Endothelial cell of umbilical vein (primary cell): ENCODE measurements at regions of chr11 and their contacts with region 1.

Region 1: GRCh38 chr11:23123753-23124152 is 263.5 kb upstream of the CCDC179 start:
- DNase-seq: peak; percentile 69
- H3K4me3 ChIP-seq: no peak overlapping the region
- H3K27ac ChIP-seq: peak overlapping the region; percentile 40
- H3K4me1 ChIP-seq: peaks cover 15% of the 10 kb centered on the region
- H3K27me3 ChIP-seq: no peaks in the 10 kb centered on the region
- CTCF ChIP-seq: no peak
- POLR2A ChIP-seq: no peak

Region 2: DNA sequence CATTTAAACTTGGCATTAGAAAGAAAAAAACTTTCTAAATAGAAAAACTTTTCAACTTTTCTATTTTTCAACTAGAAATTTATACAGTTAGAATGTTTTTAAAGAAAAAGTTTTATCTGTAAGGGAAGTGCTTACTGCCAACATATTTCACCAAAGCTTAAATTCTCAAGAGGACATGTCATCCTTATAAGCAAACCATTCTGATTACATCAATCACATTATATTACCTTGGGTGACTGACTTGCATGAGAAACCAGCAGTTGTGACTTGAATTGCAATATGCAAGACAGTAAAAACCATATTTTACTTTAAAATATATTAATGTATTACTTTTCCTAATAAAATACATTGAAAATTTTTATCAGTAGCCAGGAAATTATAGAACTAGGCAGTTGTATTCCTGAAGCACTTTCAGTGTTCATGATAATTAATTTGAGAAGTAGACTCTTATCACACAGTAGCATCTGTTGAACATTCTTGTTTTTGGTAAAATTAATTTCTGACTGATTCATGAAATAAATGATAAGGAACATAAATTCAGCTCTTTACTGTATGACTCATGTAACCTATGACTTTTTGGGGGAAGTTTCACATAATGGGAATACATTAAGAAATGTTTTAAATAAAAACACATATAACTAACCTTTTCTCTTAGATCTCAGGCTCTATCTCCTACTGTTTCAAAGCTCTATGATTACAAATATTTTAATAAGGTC is 81.6 kb after region 1 on chr11:
- CTCF ChIA-PET with region 1: no interaction called
- POLR2A ChIA-PET with region 1: no interaction called
- dilution Hi-C with region 1: no loop called
- intact Hi-C with region 1: loop called (anchors 1 kb)
- DNase-seq: peak; percentile 90
- H3K4me3 ChIP-seq: no peak overlapping the region
- H3K27ac ChIP-seq: peak overlapping the region; percentile 95
- H3K4me1 ChIP-seq: peaks cover 33% of the 10 kb centered on the region
- H3K27me3 ChIP-seq: no peaks in the 10 kb centered on the region
- CTCF ChIP-seq: no peak
- POLR2A ChIP-seq: no peak